BJ (cell line): ENCODE measurements at regions of chr17 and their contacts with region 1.

Region 1: DNA sequence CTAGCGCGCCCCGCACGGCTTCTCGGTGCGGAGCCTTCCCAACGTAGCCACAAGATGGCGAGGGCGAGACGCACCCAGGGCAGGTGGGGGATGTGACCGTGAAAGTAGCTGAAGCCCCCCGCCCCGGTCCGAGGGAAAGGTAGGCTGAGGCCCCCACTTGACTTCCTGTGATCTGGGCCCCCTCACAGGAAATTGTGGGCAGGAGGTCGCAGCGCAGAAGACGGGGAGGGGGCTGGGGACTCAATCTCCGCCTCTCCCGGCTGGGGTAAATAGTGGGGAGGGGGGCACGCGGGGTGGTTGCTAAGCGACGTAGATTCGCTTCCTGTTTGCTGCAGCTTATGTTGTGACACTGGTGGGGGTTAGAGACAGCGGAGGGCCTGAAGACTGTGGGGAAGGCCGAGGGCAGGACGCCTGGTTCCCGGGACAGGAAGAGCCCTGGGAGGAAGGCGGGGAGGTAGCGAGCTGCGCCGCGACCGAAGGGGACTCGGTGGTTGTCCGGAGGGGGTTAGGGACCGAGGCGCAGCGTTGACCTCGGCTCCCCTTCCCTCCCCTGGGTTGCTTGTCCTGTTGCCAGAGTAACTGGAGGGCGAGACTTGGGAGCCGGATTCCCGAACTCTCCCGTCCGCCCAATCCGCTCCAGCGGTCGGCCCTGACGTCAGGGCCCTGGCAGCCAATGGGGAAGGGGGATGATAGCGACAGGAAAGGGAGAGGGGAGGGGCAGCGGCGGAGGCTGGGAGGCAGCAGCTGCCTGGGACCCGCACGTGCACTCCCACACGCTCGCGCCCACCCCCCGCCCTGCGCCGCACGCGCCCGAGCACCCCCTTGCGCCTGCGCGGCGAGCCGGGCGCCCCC is 1.2 kb downstream of the KDM6B start:
- DNase-seq: peak; percentile 91
- H3K4me3 ChIP-seq: peak overlapping the region; percentile 85
- H3K27me3 ChIP-seq: peaks cover 2% of the 10 kb centered on the region; the same call in 1 of the 2 replicates
- CTCF ChIP-seq: peak; percentile 95

Region 2: GRCh38 chr17:7673239-7673638 is 161.9 kb before region 1 on chr17:
- CTCF ChIA-PET with region 1: no interaction called
- POLR2A ChIA-PET with region 1: no interaction called
- DNase-seq: no peak
- H3K4me3 ChIP-seq: no peak overlapping the region
- H3K27me3 ChIP-seq: no peaks in the 10 kb centered on the region
- CTCF ChIP-seq: peak; percentile 48

Region 3: GRCh38 chr17:7818746-7819645 is 16.2 kb before region 1 on chr17:
- CTCF ChIA-PET with region 1: interaction called, 13 read pairs
- POLR2A ChIA-PET with region 1: no interaction called
- DNase-seq: no peak
- H3K4me3 ChIP-seq: no peak overlapping the region
- H3K27me3 ChIP-seq: peaks cover 7% of the 10 kb centered on the region
- CTCF ChIP-seq: no peak

Region 4: DNA sequence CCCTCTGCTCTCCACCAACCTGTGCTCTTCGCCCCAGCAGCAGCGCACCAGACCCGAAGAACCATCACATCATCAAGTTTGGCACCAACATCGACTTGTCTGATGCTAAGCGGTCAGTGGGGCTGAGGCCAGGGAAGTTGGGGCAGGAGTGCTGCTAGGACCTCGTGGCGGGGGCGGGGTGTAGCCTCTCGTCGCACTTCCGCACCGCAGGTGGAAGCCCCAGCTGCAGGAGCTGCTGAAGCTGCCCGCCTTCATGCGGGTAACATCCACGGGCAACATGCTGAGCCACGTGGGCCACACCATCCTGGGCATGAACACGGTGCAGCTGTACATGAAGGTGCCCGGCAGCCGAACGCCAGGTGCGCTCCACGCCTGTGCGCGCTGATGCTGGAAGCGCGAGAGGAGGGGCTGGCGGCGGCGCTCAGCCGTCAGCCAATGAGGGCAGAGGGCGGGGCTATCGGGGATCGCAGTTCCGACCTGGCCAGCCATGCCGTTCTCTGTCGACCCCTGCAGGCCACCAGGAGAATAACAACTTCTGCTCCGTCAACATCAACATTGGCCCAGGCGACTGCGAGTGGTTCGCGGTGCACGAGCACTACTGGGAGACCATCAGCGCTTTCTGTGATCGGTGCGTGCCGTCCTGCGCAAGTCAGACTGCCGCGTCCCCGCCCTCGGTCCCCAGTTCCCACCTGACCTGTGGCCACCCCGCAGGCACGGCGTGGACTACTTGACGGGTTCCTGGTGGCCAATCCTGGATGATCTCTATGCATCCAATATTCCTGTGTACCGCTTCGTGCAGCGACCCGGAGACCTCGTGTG is 16.5 kb after region 1 on chr17:
- CTCF ChIA-PET with region 1: interaction called, 26 read pairs
- POLR2A ChIA-PET with region 1: interaction called, 3 read pairs
- DNase-seq: no peak
- H3K4me3 ChIP-seq: no peak overlapping the region
- H3K27me3 ChIP-seq: no peaks in the 10 kb centered on the region
- CTCF ChIP-seq: peak; percentile 96

Region 5: GRCh38 chr17:7856883-7857723 is 21.9 kb after region 1 on chr17 and contains the start of gene NAA38:
- CTCF ChIA-PET with region 1: interaction called, 13 read pairs
- POLR2A ChIA-PET with region 1: interaction called, 3 read pairs
- DNase-seq: peak; percentile 97
- H3K4me3 ChIP-seq: peak within 1 kb of the TSS; percentile 58
- H3K27me3 ChIP-seq: no peaks in the 10 kb centered on the region
- CTCF ChIP-seq: peak; percentile 59
- polyA plus RNA-seq, gene NAA38: 74.9 and 82.7 TPM in 2 replicates

Region 6: DNA sequence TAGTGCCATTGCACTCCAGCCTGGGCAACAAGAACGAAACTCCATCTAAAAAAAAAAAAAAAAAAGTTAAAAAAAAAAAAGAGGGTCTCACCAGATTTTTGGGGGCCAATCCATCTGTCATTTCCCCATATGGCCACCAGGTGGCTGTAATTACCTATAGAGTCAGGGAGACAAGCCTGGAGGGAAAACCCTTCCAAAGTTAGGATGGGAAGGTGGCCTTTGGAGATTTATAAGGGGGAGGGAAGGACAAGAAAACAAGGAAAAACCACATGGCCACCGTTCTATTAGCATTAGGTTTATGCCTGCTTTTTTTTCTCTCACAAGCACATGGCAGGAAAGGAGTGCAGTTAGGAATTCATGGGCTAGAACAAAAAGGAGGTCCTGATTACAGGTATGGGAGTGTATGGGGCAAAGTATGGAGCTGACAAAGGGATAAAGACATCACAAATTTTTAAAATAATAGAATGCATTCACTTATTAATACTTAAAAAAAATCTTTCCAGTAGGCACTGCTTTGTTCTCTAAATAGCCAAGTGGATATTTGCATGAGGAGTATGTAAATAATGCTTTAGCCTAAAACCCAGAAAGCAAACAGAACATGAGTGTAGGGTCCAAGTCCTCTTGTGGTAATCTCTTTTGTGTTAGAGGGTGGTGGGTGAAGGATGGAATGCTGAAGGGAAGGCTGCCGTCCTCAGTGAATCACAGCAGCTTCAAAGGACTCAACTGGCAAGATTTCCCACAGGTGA is 27.7 kb after region 1 on chr17:
- CTCF ChIA-PET with region 1: interaction called, 12 read pairs
- POLR2A ChIA-PET with region 1: no interaction called
- DNase-seq: no peak
- H3K4me3 ChIP-seq: no peak overlapping the region
- H3K27me3 ChIP-seq: no peaks in the 10 kb centered on the region
- CTCF ChIP-seq: peak; percentile 63